Endothelial cell of umbilical vein (primary cell): ENCODE measurements at regions of chr10 and their contacts with region 1.

Region 1: DNA sequence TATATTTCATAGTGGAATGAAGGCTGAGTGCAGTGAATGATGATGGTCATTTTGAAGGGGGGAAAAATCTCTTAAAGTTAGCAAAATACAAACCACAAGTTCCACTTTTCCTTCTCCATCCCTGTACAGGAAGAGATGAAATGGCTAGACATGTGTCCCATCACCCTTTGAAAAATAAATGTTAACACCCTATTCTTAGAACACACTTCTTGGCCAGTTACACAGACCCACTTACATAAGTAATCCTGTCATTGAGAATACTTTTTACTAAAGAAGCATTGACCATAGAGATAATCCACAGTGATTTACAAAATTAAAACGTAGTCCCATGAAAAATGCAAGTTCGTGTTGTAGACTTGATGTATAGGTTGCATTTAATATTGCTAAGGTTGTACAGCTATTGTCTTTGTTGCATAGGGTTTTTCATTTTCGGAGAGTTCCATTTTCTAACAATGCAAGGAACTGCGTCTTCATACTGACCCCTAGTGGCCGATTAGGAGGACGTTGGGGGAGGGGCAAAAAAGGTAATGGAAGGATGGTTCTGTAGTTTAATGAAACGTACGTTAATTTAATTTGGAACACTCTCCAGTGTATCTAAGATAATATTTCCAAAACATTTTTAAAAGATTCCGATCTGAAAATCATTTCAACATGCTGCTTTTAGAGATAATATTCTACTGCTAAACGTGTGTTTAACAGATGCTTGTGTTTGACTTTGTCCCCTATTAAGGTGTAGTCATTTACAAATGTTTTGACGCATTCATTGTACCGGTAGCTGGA is 60.9 kb downstream of the ARMC3 start:
- DNase-seq: peak; percentile 71
- H3K4me3 ChIP-seq: no peak overlapping the region
- H3K27ac ChIP-seq: no peak overlapping the region
- H3K4me1 ChIP-seq: no peaks in the 10 kb centered on the region
- H3K27me3 ChIP-seq: peaks cover 7 to 33% of the 10 kb centered on the region in 2 experiments
- CTCF ChIP-seq: peak; percentile 69 to 77
- POLR2A ChIP-seq: no peak

Region 2: DNA sequence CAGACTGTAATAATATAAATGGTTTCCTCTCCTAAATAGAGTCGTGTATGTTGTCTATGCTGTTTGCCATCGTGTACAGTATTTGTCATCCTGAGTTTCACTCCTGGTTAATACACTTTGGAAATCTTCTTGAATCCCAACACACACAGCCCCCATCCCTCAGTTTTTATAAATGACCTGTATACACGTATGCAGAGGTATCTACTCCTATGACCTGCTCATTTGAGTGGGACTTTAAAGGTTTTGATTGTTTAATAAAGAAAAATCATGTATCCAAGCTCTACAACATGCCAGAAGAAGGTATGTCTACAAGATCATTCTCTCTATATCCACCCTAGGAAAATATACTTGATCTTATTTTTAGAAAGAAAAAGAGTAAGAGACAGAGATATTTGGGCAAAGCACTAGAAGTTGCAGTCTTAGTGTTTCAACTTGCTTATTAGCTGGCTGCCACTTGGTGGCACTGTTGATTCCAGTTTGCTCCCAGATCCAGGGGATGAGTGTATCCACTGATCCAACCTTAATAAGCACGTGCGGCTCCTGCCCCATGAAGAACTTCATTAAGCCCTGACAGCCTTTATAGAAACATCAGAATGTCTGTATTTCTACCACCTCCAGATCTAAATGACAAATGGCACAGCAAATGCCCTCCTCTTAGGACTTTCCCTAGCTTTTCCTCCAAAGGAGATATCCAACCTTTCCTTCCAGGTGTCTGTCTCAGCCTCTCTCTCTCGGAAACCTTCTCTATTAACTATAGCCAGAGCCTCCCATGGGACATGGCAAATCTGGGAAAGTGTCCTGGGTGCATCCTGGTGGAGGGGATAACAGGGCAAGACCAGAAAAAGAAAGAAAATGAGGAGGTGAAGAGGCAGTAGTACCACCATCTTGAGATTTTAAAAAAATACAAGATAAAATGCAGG is 1910.1 kb before region 1 on chr10:
- CTCF ChIA-PET with region 1: interaction called, 3 read pairs
- POLR2A ChIA-PET with region 1: no interaction called
- dilution Hi-C with region 1: no loop called
- intact Hi-C with region 1: loop called (anchors 5 kb)
- DNase-seq: peak; percentile 72
- H3K4me3 ChIP-seq: no peak overlapping the region
- H3K27ac ChIP-seq: no peak overlapping the region
- H3K4me1 ChIP-seq: no peaks in the 10 kb centered on the region
- H3K27me3 ChIP-seq: peaks cover 5 to 8% of the 10 kb centered on the region in 2 experiments
- CTCF ChIP-seq: peak; percentile 67 to 73
- POLR2A ChIP-seq: no peak

Region 3: GRCh38 chr10:22003079-22003913 is 985.5 kb before region 1 on chr10 and contains the start of gene DNAJC1:
- CTCF ChIA-PET with region 1: interaction called, 41 read pairs
- POLR2A ChIA-PET with region 1: no interaction called
- dilution Hi-C with region 1: no loop called
- intact Hi-C with region 1: loop called (anchors 1 kb)
- DNase-seq: peak; percentile 95
- H3K4me3 ChIP-seq: peak within 1 kb of the TSS; percentile 47 to 93 (median 86)
- H3K27ac ChIP-seq: peak within 1 kb of the TSS; percentile 86
- H3K4me1 ChIP-seq: peaks cover 10% of the 10 kb centered on the region
- H3K27me3 ChIP-seq: peaks cover 3 to 27% of the 10 kb centered on the region in 2 experiments
- CTCF ChIP-seq: no peak
- POLR2A ChIP-seq: peak; percentile 80
- total RNA-seq, gene DNAJC1: 19.7 and 22.5 TPM in 2 replicates

Region 4: GRCh38 chr10:22251751-22252223 is 737.0 kb before region 1 on chr10:
- CTCF ChIA-PET with region 1: interaction called, 7 read pairs
- POLR2A ChIA-PET with region 1: no interaction called
- dilution Hi-C with region 1: no loop called
- intact Hi-C with region 1: loop called (anchors 5 kb)
- DNase-seq: peak; percentile 67
- H3K4me3 ChIP-seq: peak overlapping the region; percentile 58 to 87 (median 58)
- H3K27ac ChIP-seq: peak overlapping the region; percentile 81
- H3K4me1 ChIP-seq: peaks cover 6% of the 10 kb centered on the region
- H3K27me3 ChIP-seq: peaks cover under 1 to 1% of the 10 kb centered on the region in 2 experiments
- CTCF ChIP-seq: no peak
- POLR2A ChIP-seq: no peak

Region 5: DNA sequence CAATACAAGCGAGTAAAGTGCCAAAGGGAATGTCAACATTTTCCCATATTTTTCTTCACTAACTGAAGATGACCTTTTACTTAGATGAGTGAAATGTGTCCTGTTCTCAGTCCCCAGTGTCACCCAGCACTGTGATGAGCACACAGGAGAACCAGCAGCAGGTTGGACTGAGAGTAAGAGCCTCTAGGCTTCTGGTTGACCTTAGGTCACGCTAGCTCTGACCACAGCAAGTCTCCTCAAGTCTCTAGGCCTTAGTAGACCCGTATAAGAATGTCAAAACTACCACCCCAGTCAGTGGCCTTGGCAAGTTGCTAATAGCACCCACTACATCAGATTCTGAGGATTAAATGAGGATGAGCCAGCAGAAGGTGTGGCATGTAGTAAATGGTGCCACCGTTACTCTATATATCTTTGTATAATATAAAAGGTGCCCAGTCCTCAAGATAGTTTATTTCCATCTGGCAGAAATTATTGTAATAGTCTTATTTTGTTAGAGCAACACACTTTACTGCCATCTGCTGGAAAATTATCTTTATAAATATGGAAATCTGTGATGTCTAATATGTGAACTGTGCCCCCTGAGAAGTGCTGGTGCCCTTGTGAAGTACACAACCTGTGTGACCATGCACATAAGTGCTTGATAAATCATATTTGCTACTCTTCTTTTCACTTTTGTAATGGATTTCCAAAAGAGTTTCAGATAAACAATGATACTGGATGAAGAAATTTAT is 567.8 kb before region 1 on chr10:
- CTCF ChIA-PET with region 1: interaction called, 4 read pairs
- POLR2A ChIA-PET with region 1: no interaction called
- dilution Hi-C with region 1: no loop called
- intact Hi-C with region 1: loop called (anchors 5 kb)
- DNase-seq: peak; percentile 47
- H3K4me3 ChIP-seq: no peak overlapping the region
- H3K27ac ChIP-seq: no peak overlapping the region
- H3K4me1 ChIP-seq: no peaks in the 10 kb centered on the region
- H3K27me3 ChIP-seq: no peaks in the 10 kb centered on the region
- CTCF ChIP-seq: peak in 1 of 2 donors; percentile 9
- POLR2A ChIP-seq: no peak

Region 6: GRCh38 chr10:22550732-22551131 is 438.0 kb before region 1 on chr10:
- CTCF ChIA-PET with region 1: interaction called, 17 read pairs
- POLR2A ChIA-PET with region 1: no interaction called
- dilution Hi-C with region 1: no loop called
- intact Hi-C with region 1: loop called (anchors 1 kb)
- DNase-seq: peak; percentile 44
- H3K4me3 ChIP-seq: no peak overlapping the region
- H3K27ac ChIP-seq: no peak overlapping the region
- H3K4me1 ChIP-seq: no peaks in the 10 kb centered on the region
- H3K27me3 ChIP-seq: no peaks in the 10 kb centered on the region
- CTCF ChIP-seq: peak; percentile 60 to 61
- POLR2A ChIP-seq: no peak

Region 7: GRCh38 chr10:22945934-22946673 is 42.7 kb before region 1 on chr10:
- CTCF ChIA-PET with region 1: no interaction called
- POLR2A ChIA-PET with region 1: no interaction called
- dilution Hi-C with region 1: no loop called
- intact Hi-C with region 1: no loop called
- DNase-seq: no peak
- H3K4me3 ChIP-seq: no peak overlapping the region
- H3K27ac ChIP-seq: no peak overlapping the region
- H3K4me1 ChIP-seq: no peaks in the 10 kb centered on the region
- H3K27me3 ChIP-seq: peaks cover 0 to 2% of the 10 kb centered on the region in 2 experiments
- CTCF ChIP-seq: no peak
- POLR2A ChIP-seq: no peak